WTC11 (cell line): ENCODE measurements at regions of chr10 and their contacts with region 1.

Region 1: DNA sequence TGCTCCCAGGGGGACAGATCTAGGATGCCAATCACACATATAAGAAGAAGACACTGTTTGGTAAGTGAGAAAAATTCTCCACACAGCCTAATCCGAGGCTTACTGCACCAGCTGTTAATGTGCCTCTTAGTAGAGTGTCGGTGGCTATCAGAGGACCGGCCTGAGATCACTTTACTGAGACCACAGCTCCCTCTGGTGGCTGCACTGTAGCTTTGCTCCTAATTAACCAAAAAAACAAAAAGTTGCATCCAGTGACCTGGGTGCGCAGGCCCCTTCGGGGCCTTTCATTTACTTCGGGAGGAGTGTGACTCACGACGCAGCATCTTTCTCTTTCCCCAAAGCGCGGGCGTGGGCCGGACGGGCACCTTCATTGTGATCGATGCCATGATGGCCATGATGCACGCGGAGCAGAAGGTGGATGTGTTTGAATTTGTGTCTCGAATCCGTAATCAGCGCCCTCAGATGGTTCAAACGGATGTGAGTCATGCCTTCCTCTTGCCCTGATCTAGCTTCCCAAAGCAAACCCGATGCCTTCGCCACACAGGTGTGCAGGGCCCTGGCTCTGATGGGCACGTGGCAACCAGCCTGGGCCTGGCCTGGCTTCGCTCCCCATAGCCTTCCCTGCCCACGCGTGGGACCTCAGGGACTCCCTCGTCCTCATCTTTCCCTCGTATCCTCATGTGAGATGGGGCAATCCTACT is 56.7 kb downstream of the MKI67 start:
- DNase-seq: peak; percentile 78
- ATAC-seq: peak; percentile 89
- H3K4me3 Mint-ChIP-seq: no peak overlapping the region
- H3K27ac Mint-ChIP-seq: no peak overlapping the region
- H3K4me1 Mint-ChIP-seq: peaks cover 8% of the 10 kb centered on the region
- H3K27me3 Mint-ChIP-seq: no peaks in the 10 kb centered on the region
- CTCF ChIP-seq: peak; percentile 87

Region 2: GRCh38 chr10:127853868-127854768 is 215.4 kb before region 1 on chr10:
- CTCF ChIA-PET with region 1: interaction called, 12 read pairs
- POLR2A ChIA-PET with region 1: no interaction called
- DNase-seq: peak; percentile 70
- ATAC-seq: peak; percentile 88
- H3K4me3 Mint-ChIP-seq: no peak overlapping the region
- H3K27ac Mint-ChIP-seq: no peak overlapping the region
- H3K4me1 Mint-ChIP-seq: peaks cover 11% of the 10 kb centered on the region
- H3K27me3 Mint-ChIP-seq: no peaks in the 10 kb centered on the region
- CTCF ChIP-seq: peak; percentile 83

Region 3: DNA sequence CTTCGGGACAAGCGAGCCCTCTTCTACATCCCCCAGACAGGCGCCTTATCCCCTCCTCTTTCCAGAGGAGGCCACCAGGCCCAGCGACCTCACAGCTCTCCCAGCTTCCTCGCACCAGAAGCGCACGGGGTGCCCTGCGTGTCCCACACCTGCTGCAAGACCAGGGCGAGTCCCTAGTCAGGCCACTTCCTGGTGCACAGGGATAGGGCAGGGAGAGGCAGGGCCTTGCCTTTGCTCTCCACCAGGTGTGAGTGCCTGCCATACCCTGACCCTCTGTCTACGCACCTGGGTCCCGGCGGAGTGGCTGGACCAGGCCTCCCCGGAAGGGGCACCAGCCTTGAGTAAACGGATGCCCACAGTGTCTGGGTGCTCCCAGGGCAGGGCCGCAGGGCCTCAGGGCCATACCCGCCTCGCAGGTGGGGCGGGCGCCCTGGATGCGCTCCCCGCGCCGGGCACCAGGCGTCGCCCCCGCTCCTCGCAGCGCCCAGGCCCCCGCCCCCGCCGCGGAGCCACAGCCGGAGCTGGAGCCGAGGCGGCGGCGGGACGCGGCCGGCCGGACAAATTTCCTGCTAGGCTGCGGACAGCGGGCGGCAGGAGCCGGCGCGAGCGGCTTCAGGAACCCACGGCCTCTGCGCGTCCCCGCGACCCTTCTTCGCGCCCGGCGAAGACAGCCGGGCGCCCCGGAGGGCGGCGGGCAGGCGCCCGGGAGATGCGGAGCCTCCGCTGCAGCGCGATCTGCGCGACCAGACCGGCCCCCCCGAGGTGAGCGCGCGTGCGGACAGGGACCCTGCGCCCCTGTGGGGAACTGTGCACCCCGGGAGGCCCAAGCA is 162.7 kb before region 1 on chr10 and contains the start of gene PTPRE:
- CTCF ChIA-PET with region 1: interaction called, 28 read pairs
- POLR2A ChIA-PET with region 1: no interaction called
- DNase-seq: peak; percentile 76
- ATAC-seq: peak; percentile 94
- H3K4me3 Mint-ChIP-seq: peak within 1 kb of the TSS; percentile 52
- H3K27ac Mint-ChIP-seq: no peak within 1 kb of the TSS
- H3K4me1 Mint-ChIP-seq: peaks cover 3% of the 10 kb centered on the region
- H3K27me3 Mint-ChIP-seq: peaks cover 23% of the 10 kb centered on the region
- CTCF ChIP-seq: peak; percentile 65; the same call in 1 of the 2 replicates
- total RNA-seq, gene PTPRE: 1.7 to 3.1 TPM (median 2.0 TPM) in 3 replicates

Region 4: DNA sequence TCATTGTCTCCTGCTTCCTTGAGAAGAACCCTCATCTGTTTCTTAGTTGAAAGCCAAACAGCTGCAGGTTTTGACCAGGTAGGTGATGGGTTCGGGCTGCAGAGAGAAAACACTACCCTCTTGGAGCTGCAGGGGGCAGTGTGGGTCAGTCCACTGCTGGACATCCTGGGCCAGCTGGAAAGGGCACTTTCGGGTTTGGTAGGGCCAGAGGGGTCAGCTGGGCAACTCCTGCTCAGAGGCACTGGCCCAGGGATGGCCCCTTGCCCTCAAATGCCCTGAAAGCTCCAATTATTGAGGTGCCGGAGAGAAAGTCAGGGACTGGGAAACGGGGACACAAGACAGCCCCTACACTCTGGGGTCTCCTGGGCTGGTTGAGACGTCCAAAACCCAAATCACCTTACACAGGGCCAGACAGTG is 33.9 kb before region 1 on chr10:
- CTCF ChIA-PET with region 1: interaction called, 125 read pairs
- POLR2A ChIA-PET with region 1: interaction called, 7 read pairs
- DNase-seq: peak; percentile 82
- ATAC-seq: peak; percentile 94
- H3K4me3 Mint-ChIP-seq: no peak overlapping the region
- H3K27ac Mint-ChIP-seq: no peak overlapping the region
- H3K4me1 Mint-ChIP-seq: peaks cover 15% of the 10 kb centered on the region
- H3K27me3 Mint-ChIP-seq: no peaks in the 10 kb centered on the region
- CTCF ChIP-seq: peak; percentile 73

Region 5: GRCh38 chr10:128092454-128092853 is 23.0 kb after region 1 on chr10:
- CTCF ChIA-PET with region 1: interaction called, 16 read pairs
- POLR2A ChIA-PET with region 1: no interaction called
- DNase-seq: no peak
- ATAC-seq: no peak
- H3K4me3 Mint-ChIP-seq: no peak overlapping the region
- H3K27ac Mint-ChIP-seq: no peak overlapping the region
- H3K4me1 Mint-ChIP-seq: peaks cover 15% of the 10 kb centered on the region
- H3K27me3 Mint-ChIP-seq: no peaks in the 10 kb centered on the region
- CTCF ChIP-seq: no peak

Region 6: GRCh38 chr10:128111696-128112095 is 42.2 kb after region 1 on chr10:
- CTCF ChIA-PET with region 1: no interaction called
- POLR2A ChIA-PET with region 1: no interaction called
- DNase-seq: no peak
- ATAC-seq: no peak
- H3K4me3 Mint-ChIP-seq: no peak overlapping the region
- H3K27ac Mint-ChIP-seq: no peak overlapping the region
- H3K4me1 Mint-ChIP-seq: no peaks in the 10 kb centered on the region
- H3K27me3 Mint-ChIP-seq: no peaks in the 10 kb centered on the region
- CTCF ChIP-seq: no peak